ENCODE measurements at regions of chr4 and their contacts with region 1.

Region 1: GRCh38 chr4:152640058-152640833 is 39.6 kb downstream of the TMEM154 start:
- DNase-seq: no peak
- ATAC-seq: 0 out of 3 replicates have a peak, but pooled peaks have one; percentile 3
- H3K4me3 ChIP-seq: no peak overlapping the region
- H3K27ac ChIP-seq: no peak overlapping the region; the same call in 1 of the 2 replicates
- H3K4me1 ChIP-seq: peaks cover 65% of the 10 kb centered on the region
- H3K27me3 ChIP-seq: no peaks in the 10 kb centered on the region
- CTCF ChIP-seq: peak; percentile 34 to 63 (median 49); a peak in 4 of 6 replicates
- EP300 ChIP-seq: no peak
- POLR2A ChIP-seq: no peak
- RAD21 ChIP-seq: peak; percentile 75

Region 2: DNA sequence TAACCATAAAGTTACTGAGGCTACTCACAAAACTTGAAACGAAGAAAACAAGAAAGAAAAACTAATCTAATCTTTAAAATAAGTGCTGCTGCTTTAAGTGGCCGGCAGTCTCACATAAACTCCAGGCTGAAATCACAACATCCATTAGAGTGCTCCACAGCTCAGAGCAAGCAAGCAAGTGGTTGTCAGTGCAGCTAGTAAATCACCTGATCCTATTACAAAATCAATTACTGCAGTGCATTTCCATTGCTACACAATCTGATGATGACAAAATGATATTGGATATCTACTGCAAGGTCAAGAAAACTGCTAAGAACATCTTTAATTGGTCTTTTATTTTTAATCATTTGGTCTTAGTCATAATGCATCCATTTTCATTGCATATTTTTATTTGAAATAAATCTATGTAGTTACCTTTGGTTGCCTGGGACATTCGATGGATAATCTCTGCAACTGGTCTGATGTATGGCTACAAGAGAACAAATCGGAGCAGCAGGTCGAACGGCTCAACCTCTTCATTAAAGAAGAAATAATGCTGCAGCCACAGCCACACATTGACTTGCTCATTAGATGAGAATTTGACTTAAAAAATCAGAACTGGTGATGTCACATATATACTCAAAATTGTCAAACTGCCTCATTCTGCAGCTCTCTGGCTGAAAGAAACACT is 192.1 kb before region 1 on chr4:
- CTCF ChIA-PET with region 1: interaction called, 40 read pairs
- POLR2A ChIA-PET with region 1: no interaction called
- RAD21 ChIA-PET with region 1: interaction called, 15 read pairs
- SMC1A ChIA-PET with region 1: interaction called, 18 read pairs
- in situ Hi-C with region 1: no loop called
- intact Hi-C with region 1: no loop called
- DNase-seq: no peak
- ATAC-seq: no peak
- H3K4me3 ChIP-seq: no peak overlapping the region
- H3K27ac ChIP-seq: no peak overlapping the region
- H3K4me1 ChIP-seq: no peaks in the 10 kb centered on the region
- H3K27me3 ChIP-seq: no peaks in the 10 kb centered on the region
- CTCF ChIP-seq: no peak
- EP300 ChIP-seq: no peak
- POLR2A ChIP-seq: no peak
- RAD21 ChIP-seq: no peak

Region 3: DNA sequence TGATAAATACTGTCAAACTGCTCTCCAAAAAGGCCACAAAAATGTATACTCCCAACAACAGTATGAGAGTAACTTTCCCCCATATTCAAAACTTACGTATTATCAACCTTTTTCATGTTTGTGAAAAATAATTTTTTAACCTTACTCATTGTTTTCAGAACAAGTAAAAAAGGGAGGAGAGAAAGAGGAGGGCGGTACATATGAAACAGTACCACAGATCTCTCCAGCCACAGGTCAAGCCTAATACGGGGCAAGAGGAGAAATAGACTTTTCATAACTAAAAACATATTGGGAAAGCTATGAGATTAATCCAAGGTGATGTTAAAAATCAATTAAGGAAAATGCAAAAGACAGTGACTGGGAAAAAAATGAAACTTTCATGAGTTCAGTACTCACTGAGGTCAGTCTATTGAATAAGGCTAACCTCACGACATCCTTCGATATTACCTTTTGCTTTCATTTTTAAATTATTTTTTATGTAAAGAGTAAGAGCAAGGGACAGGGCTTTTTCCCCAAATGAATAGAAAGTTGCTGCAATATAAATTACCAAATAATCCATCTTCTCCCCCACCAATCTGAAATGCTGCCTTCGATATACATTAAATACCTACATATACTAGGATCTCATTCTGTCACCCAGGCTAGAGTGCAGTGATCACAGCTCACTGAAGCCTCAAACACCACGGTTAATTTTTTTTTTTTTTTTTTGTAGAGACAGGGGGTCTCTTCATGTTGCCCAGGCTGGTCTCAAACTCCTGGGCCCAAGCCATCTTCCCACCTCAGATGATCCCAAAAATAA is 129.7 kb before region 1 on chr4:
- CTCF ChIA-PET with region 1: interaction called, 465 read pairs
- POLR2A ChIA-PET with region 1: interaction called, 3 read pairs
- RAD21 ChIA-PET with region 1: interaction called, 513 read pairs
- SMC1A ChIA-PET with region 1: interaction called, 555 read pairs
- in situ Hi-C with region 1: loop called (anchors 5 kb)
- intact Hi-C with region 1: no loop called
- DNase-seq: no peak
- ATAC-seq: peak; percentile 71
- H3K4me3 ChIP-seq: peak overlapping the region; percentile 61; the same call in 1 of the 2 replicates
- H3K27ac ChIP-seq: peak overlapping the region; percentile 74
- H3K4me1 ChIP-seq: peaks cover 24% of the 10 kb centered on the region
- H3K27me3 ChIP-seq: no peaks in the 10 kb centered on the region
- CTCF ChIP-seq: no peak
- EP300 ChIP-seq: no peak
- POLR2A ChIP-seq: no peak
- RAD21 ChIP-seq: no peak

Region 4: DNA sequence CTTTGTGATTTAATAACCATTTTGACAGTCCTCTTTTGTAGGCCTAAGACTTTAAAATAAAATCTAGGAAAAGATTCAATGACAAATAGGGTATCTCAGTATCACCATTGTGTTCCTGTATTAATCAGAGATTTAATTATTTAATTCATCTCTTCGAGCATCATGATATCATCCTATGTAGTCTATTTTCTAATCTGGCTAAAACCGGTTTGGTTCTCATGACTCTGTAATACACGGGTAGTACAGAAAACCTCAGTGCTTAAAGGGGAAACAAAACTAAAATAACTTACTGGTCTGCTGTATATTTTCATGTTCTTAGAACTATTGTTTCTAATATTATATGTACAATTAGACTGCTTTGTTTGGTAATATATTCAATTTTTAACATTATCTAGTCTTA is 80.6 kb before region 1 on chr4:
- CTCF ChIA-PET with region 1: interaction called, 13 read pairs
- POLR2A ChIA-PET with region 1: interaction called, 11 read pairs
- RAD21 ChIA-PET with region 1: interaction called, 100 read pairs
- SMC1A ChIA-PET with region 1: interaction called, 138 read pairs
- in situ Hi-C with region 1: no loop called
- intact Hi-C with region 1: no loop called
- DNase-seq: no peak
- ATAC-seq: peak; percentile 56
- H3K4me3 ChIP-seq: no peak overlapping the region
- H3K27ac ChIP-seq: peak overlapping the region; percentile 81
- H3K4me1 ChIP-seq: peaks cover 75% of the 10 kb centered on the region
- H3K27me3 ChIP-seq: no peaks in the 10 kb centered on the region
- CTCF ChIP-seq: no peak
- EP300 ChIP-seq: no peak
- POLR2A ChIP-seq: no peak
- RAD21 ChIP-seq: no peak

Region 5: DNA sequence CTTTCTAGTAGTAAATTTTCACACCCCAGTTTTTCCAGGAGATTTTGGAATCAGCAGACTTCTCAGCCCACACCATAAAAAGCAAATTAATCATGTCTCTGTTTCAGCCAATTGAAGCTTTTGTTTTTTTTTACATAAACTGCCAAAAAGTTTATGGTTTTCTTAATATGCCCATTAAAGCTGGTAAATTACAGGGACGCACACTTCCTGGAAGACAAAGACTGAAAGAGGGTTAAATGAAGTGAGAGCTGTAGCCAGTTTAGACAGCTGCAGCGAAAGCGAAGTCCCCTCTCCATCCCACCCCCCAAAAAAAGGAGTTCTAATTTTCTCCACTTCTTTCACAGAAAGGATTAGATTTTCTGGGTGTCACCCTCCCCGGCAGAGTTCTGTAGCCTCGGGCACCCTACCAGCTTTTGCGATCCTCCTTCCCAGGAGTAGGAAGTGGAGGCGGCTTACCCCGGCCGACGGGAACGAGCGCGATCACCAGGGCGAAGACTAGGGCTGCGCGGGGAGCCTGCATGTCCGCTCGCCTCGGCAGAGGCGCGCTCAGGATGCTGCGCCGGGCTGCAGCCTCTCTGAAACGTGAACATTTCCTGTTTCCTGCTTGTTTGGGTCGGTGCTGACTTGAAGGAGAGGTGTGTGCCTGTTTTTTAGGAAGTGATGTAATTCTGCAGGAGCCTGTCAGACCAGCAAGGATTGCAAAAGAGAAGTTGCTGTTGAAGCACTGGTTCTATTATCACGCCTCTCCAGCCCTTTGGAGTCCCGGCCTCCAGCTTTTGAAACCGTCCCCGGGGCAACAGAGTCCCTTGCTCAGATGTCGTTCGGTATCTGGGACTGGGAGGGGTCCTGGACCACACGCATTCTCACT is 39.4 kb after region 1 on chr4 and contains the start of gene TMEM154:
- CTCF ChIA-PET with region 1: interaction called, 34 read pairs
- POLR2A ChIA-PET with region 1: interaction called, 31 read pairs
- RAD21 ChIA-PET with region 1: interaction called, 72 read pairs
- SMC1A ChIA-PET with region 1: interaction called, 229 read pairs
- in situ Hi-C with region 1: no loop called
- intact Hi-C with region 1: no loop called
- DNase-seq: no peak
- ATAC-seq: peak; percentile 80
- H3K4me3 ChIP-seq: peak within 1 kb of the TSS; percentile 89
- H3K27ac ChIP-seq: peak within 1 kb of the TSS; percentile 54
- H3K4me1 ChIP-seq: peaks cover 41% of the 10 kb centered on the region
- H3K27me3 ChIP-seq: no peaks in the 10 kb centered on the region
- CTCF ChIP-seq: 0 out of 6 replicates have a peak, but pooled peaks of 1 of the 3 experiments have one; percentile 7
- EP300 ChIP-seq: 0 out of 4 replicates have a peak, but pooled peaks of 1 of the 2 experiments have one; percentile 20
- POLR2A ChIP-seq: peak; percentile 95
- RAD21 ChIP-seq: no peak
- polyA plus RNA-seq, gene TMEM154: 9.3 to 17.6 TPM

Region 6: GRCh38 chr4:152779513-152780266 is 139.4 kb after region 1 on chr4 and contains the starts of genes ARFIP1 and TIGD4:
- CTCF ChIA-PET with region 1: interaction called, 7 read pairs
- POLR2A ChIA-PET with region 1: no interaction called
- RAD21 ChIA-PET with region 1: interaction called, 4 read pairs
- SMC1A ChIA-PET with region 1: interaction called, 6 read pairs
- in situ Hi-C with region 1: no loop called
- intact Hi-C with region 1: loop called (anchors 5 kb)
- DNase-seq: peak; percentile 90
- ATAC-seq: peak; percentile 93
- H3K4me3 ChIP-seq: peak within 1 kb of the TSS; percentile 91
- H3K27ac ChIP-seq: peak within 1 kb of the TSS; percentile 87
- H3K4me1 ChIP-seq: peaks cover 5% of the 10 kb centered on the region
- H3K27me3 ChIP-seq: no peaks in the 10 kb centered on the region
- CTCF ChIP-seq: peak; percentile 23 to 50 (median 35); a peak in 5 of 6 replicates
- EP300 ChIP-seq: no peak
- POLR2A ChIP-seq: peak; percentile 84
- RAD21 ChIP-seq: peak; percentile 35; the same call in 1 of the 2 replicates
- polyA plus RNA-seq, gene ARFIP1: 9.5 to 11.0 TPM
- polyA plus RNA-seq, gene TIGD4: 0.24 to 0.31 TPM

Region 7: DNA sequence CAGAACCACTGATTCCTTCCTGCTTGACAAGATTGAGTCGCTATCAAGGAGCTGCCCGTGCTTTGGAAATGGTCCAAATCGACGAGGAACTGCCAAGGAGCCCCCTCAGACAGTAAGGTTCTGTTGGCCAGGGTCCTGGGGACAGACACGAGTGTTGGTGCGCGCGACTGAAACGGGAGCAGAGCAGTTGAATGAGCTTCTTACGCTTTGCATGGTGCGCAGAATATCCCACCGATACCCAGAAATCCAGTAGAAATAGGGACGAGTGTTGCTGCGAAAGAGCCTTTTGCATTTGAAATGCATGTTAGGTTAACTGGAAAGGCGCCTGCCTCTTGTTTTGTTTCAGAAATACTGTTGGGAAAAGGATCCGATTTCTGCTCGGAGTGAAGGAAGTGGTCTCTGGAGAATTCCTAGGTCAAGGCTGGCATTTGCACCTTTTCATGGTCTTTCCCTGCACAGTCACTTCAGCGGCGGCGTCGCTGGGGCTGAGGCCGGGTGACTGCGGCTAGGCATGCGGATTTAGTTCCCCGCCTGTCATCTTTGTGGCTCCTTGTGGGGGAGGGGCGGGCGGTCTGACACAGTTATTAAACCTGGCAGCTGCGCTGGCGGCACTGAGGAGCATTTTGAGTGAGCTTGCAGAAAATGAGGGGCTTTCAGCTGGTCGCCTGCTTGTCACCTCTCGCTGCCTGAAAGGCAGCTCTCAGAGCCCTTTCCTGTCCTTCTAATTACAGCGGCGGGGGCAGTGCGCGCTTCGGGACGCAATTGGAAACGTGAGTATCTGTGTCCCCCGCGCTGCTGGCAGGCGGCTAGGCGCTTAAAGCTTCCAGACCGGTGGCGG is 512.5 kb after region 1 on chr4:
- CTCF ChIA-PET with region 1: no interaction called
- POLR2A ChIA-PET with region 1: no interaction called
- RAD21 ChIA-PET with region 1: no interaction called
- SMC1A ChIA-PET with region 1: no interaction called
- in situ Hi-C with region 1: no loop called
- intact Hi-C with region 1: no loop called
- DNase-seq: no peak
- ATAC-seq: peak; percentile 45
- H3K4me3 ChIP-seq: peak overlapping the region; percentile 62
- H3K27ac ChIP-seq: no peak overlapping the region
- H3K4me1 ChIP-seq: peaks cover 33% of the 10 kb centered on the region
- H3K27me3 ChIP-seq: peaks cover 0 to 5% of the 10 kb centered on the region in 2 experiments; a peak in 3 of 4 replicates
- CTCF ChIP-seq: no peak
- EP300 ChIP-seq: no peak
- POLR2A ChIP-seq: no peak
- RAD21 ChIP-seq: no peak